Kidney (tissue), 22 donors: ENCODE measurements at regions of chr5 and their contacts with region 1.

Region 1: GRCh38 chr5:172188033-172188892 is at the start of gene STK10:
- DNase-seq: peak; percentile 90 to 97 (median 93)
- H3K4me3 ChIP-seq: peak within 1 kb of the TSS; percentile 58 to 85 (median 84)
- H3K27ac ChIP-seq: peak within 1 kb of the TSS; percentile 82 to 85
- H3K4me1 ChIP-seq: peaks cover 0 to 5% (median 0%) of the 10 kb centered on the region in 3 donors
- H3K27me3 ChIP-seq: no peaks in the 10 kb centered on the region
- CTCF ChIP-seq: peak; percentile 88
- total RNA-seq, gene STK10: 42.8 TPM

Region 2: GRCh38 chr5:172110921-172111851 is 77.1 kb before region 1 on chr5:
- intact Hi-C with region 1: loop called (anchors 10 kb)
- DNase-seq: peak in 1 of 5 donors; percentile 74
- H3K4me3 ChIP-seq: no peak overlapping the region
- H3K27ac ChIP-seq: peak overlapping the region in 1 of 2 donors; percentile 72
- H3K4me1 ChIP-seq: peaks cover 2 to 25% (median 5%) of the 10 kb centered on the region in 3 donors
- H3K27me3 ChIP-seq: no peaks in the 10 kb centered on the region
- CTCF ChIP-seq: no peak

Region 3: GRCh38 chr5:172274921-172275753 is 86.9 kb after region 1 on chr5:
- intact Hi-C with region 1: no loop called
- DNase-seq: no peak
- H3K4me3 ChIP-seq: no peak overlapping the region
- H3K27ac ChIP-seq: no peak overlapping the region
- H3K4me1 ChIP-seq: peaks cover 0 to 7% (median 0%) of the 10 kb centered on the region in 3 donors
- H3K27me3 ChIP-seq: no peaks in the 10 kb centered on the region
- CTCF ChIP-seq: no peak